ENCODE measurements at regions of chr18 and their contacts with region 1.

Region 1: DNA sequence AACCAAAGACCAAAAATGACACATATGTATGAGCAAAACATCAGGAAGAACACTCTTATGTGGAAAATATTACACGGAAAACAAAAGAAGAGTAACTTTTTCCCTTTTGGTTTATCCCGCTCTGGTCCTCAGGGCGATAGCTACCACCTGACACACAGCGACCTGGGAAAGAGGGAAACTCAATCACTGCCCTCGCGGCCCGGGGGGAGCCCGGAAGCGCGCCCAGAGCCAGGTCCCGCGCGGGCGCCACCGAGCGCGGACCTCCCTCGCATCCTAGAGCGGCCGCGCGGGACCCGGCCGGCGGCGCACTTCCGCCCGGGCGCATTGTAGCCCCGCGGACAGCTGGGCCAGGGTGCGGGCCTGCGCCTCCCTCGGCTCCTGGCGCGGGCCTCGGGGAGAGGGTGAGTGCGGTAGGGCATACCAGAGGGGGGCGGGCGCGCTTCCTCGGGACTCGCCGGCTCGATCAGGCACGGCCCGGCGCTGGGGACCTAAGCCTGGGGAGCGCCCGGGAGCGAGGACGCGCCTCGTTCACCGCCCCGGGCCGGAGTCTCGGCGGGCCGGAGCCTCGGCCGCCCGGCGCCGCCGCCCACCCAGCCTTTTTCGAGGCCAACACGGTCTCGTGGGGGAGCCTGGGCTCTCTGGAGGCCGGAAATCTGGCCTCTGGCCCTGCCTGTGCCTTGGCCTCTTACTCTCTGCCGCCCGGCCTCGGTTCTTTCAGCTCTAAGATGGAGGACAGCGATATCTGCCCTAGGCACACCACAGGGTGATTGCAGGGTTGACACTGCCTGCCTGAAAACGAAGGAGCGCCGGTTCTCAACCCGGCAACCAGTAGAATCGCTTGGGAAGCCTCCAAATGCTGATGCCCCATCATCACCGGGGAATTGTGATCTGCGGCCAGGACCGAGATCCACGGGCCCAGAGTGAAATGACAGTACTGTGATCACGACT is at the start of gene ELAC1:
- DNase-seq: peak; percentile 94
- H3K4me3 ChIP-seq: peak within 1 kb of the TSS; percentile 76 to 96
- H3K27ac ChIP-seq: peak within 1 kb of the TSS; percentile 91 to 93
- H3K4me1 ChIP-seq: peaks cover 4 to 11% of the 10 kb centered on the region in 2 experiments; a peak in 2 of 4 replicates
- H3K27me3 ChIP-seq: no peaks in the 10 kb centered on the region
- CTCF ChIP-seq: 0 out of 2 replicates have a peak, but pooled peaks have one; percentile 2
- EP300 ChIP-seq: no peak
- RAD21 ChIP-seq: no peak
- polyA plus RNA-seq, gene ELAC1: 10.8 and 13.0 TPM in 2 replicates

Region 2: GRCh38 chr18:50878345-50879301 is 89.4 kb before region 1 on chr18 and contains the start of gene ME2:
- CTCF ChIA-PET with region 1: no interaction called
- POLR2A ChIA-PET with region 1: interaction called, 14 read pairs
- DNase-seq: peak; percentile 99
- H3K4me3 ChIP-seq: peak within 1 kb of the TSS; percentile 73 to 89
- H3K27ac ChIP-seq: peak within 1 kb of the TSS; percentile 79 to 89
- H3K4me1 ChIP-seq: peaks cover 0 to 3% of the 10 kb centered on the region in 2 experiments; a peak in 1 of 4 replicates
- H3K27me3 ChIP-seq: no peaks in the 10 kb centered on the region
- CTCF ChIP-seq: no peak
- EP300 ChIP-seq: no peak
- RAD21 ChIP-seq: no peak
- polyA plus RNA-seq, gene ME2: 35.1 and 41.8 TPM in 2 replicates

Region 3: DNA sequence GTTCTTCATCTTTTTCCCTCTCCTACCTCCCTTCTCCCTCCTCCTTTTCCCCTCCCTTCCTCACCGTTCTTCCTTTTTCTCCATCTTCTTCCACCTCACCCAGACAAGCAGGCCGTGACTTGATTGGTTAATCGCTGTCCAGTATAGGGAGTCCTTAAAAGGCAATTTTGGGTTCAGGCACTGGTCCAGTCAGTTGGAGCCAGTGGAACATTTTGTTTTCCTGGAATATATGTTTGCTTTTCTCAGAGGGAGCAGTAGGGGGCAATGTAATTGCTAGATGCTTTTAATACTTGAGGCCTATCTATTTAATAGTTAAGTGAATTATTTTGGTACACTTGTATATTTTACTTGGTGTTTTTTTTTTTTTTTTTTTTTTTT is 14.8 kb after region 1 on chr18:
- CTCF ChIA-PET with region 1: interaction called, 10 read pairs
- POLR2A ChIA-PET with region 1: no interaction called
- DNase-seq: no peak
- H3K4me3 ChIP-seq: no peak overlapping the region
- H3K27ac ChIP-seq: no peak overlapping the region
- H3K4me1 ChIP-seq: peaks cover 3 to 5% of the 10 kb centered on the region in 2 experiments; a peak in 1 of 4 replicates
- H3K27me3 ChIP-seq: no peaks in the 10 kb centered on the region
- CTCF ChIP-seq: peak; percentile 38
- EP300 ChIP-seq: no peak
- RAD21 ChIP-seq: 0 out of 2 replicates have a peak, but pooled peaks have one; percentile 11

Region 4: GRCh38 chr18:51029694-51030536 is 61.9 kb after region 1 on chr18 and contains the start of gene SMAD4:
- CTCF ChIA-PET with region 1: interaction called, 3 read pairs
- POLR2A ChIA-PET with region 1: interaction called, 11 read pairs
- DNase-seq: peak; percentile 98
- H3K4me3 ChIP-seq: peak within 1 kb of the TSS; percentile 77 to 87
- H3K27ac ChIP-seq: peak within 1 kb of the TSS; percentile 84 to 97
- H3K4me1 ChIP-seq: peaks cover 13 to 24% of the 10 kb centered on the region in 2 experiments; a peak in 3 of 4 replicates
- H3K27me3 ChIP-seq: no peaks in the 10 kb centered on the region
- CTCF ChIP-seq: no peak
- EP300 ChIP-seq: no peak; a peak in 1 of 4 replicates
- RAD21 ChIP-seq: no peak
- polyA plus RNA-seq, gene SMAD4: 43.3 and 55.3 TPM in 2 replicates